CD14-positive monocyte (primary cell): ENCODE measurements at regions of chr14 and their contacts with region 1.

Region 1: DNA sequence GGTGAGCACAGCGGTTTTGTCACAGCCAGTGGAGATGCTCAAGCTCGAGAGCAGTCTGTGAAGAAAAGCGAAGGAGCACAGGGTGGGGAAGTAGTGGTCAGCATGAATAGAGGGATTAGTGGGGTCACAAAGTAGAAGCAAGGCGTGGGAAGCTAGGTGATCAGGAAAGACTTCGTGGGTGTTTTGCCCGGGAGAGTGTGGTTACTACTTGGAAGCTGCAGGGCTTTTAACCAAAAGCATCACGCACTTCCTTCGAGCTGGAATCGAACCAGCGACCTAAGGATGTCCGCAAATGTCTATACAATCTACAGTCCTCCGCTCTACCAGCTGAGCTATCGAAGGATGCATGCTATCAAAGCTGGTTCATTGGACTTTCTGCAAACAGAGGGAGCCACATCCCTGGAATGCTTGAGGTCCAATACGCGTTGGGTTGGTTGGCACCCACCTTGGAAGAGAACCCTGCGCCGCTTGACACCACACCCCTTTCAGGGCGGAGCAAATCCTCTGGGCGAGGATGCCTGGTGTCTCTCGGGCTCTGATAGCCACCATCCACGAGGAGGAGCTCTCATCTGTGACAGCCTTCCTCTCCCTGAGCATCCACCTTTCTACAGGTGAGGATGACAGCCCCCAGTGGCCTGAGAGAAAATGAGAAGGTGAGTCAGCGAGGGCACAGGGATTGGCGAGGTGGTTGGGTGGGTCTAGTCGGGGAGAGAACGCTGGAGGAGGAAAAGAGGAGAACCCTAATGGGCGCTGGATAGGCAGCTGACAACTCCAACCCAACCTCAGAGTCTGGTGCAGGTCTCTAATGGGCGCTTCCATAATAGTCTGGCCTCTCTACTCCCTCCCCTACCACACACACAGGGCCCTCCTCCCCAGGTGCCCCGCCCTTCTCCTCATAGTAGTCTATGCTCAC is 16.0 kb upstream of the OR6S1 start:
- DNase-seq: no peak
- H3K4me3 ChIP-seq: no peak overlapping the region
- H3K4me3 Mint-ChIP-seq: peak overlapping the region in 1 of 2 donors; percentile 64
- H3K27ac ChIP-seq: no peak overlapping the region
- H3K27ac Mint-ChIP-seq: no peak overlapping the region
- H3K4me1 ChIP-seq: peaks cover 0 to 4% of the 10 kb centered on the region in 2 donors
- H3K4me1 Mint-ChIP-seq: peaks cover 26% of the 10 kb centered on the region
- H3K27me3 ChIP-seq: peaks cover 35 to 47% of the 10 kb centered on the region in 2 donors
- H3K27me3 Mint-ChIP-seq: peaks cover 64 to 79% (median 68%) of the 10 kb centered on the region in 3 donors
- CTCF ChIP-seq: no peak

Region 2: DNA sequence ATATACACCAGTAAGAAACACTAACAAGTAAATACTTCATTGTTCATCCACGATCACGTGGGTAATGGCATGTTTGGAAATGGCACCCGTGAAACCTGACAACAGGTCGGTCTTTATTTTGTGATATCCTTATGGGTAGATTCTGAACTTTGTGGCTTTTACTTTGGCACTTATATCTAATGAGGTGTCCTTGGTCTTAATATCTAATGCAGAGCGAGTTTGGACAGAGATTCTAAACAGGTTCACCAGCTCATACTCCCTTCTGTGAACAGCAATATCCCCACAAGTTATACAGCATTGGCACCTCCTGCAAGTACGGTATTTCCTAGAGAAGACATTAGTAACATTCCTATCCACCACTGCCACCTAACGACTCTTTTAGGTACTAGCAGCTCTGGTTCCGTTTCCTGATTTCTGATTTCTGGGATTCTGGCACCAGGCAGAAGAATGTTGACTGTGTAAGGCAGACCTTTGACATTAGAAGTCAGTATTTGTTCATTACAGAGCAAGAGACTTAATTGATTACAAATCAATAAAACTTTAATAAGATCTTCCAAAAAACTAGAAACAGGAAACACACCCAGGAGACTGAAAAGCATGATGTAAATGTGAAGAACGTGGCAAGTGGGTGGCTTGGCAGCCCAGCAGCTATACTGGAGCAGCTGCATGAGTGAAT is 33.5 kb after region 1 on chr14:
- intact Hi-C with region 1: loop called (anchors 5 kb)
- DNase-seq: peak; percentile 56 to 84 (median 69)
- H3K4me3 ChIP-seq: no peak overlapping the region
- H3K4me3 Mint-ChIP-seq: no peak overlapping the region
- H3K27ac ChIP-seq: no peak overlapping the region
- H3K27ac Mint-ChIP-seq: no peak overlapping the region
- H3K4me1 ChIP-seq: peaks cover 6 to 9% of the 10 kb centered on the region in 2 donors
- H3K4me1 Mint-ChIP-seq: peaks cover 15% of the 10 kb centered on the region
- H3K27me3 ChIP-seq: no peaks in the 10 kb centered on the region
- H3K27me3 Mint-ChIP-seq: no peaks in the 10 kb centered on the region
- CTCF ChIP-seq: peak; percentile 91